RWPE1 (cell line): ENCODE measurements at regions of chr10 and their contacts with region 1.

Region 1: GRCh38 chr10:69914398-69915214 is 112.9 kb downstream of the COL13A1 start:
- DNase-seq: peak; percentile 79
- H3K27ac ChIP-seq: no peak overlapping the region
- CTCF ChIP-seq: peak; percentile 92

Region 2: DNA sequence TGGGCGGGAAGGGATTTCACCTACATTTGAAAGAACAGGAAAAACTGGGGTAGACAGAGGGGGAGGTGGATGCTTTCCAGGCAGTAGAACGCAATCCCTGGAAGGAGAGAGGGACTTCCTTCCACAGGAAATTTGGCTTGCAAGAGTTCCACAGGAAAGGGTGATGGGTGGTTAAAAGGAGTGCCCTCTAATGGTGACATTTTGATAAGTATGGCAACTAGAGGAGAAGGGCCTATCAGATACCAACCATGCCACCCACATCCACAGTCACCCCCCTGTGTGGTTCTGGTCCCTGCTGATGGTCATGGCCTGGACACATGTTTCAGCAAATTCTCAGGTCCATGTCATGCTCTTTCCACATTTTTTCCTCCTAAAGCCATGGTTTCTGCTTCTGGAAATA is 140.0 kb before region 1 on chr10:
- CTCF ChIA-PET with region 1: no interaction called
- POLR2A ChIA-PET with region 1: no interaction called
- DNase-seq: no peak
- H3K27ac ChIP-seq: no peak overlapping the region
- CTCF ChIP-seq: no peak

Region 3: DNA sequence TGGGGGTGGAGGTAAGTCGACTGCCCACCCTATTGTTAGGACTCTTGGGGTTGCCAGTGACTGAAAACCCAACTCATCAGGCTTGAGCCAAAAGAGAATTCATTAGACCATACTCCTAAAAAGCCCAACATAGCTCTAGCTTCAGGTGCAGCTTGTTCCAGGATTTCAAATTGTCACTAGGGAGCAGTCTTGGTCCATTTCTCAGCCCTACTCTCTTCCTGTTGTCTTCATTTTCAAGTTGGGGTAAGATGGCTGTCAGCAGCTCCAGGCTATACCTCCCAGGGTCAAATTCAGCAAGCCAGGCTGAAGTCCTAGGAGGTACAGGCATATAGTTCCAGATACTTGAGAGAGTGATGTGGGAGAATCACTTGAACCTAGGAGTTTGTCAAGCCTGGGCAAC is 127.8 kb before region 1 on chr10:
- CTCF ChIA-PET with region 1: interaction called, 21 read pairs
- POLR2A ChIA-PET with region 1: no interaction called
- DNase-seq: no peak
- H3K27ac ChIP-seq: no peak overlapping the region
- CTCF ChIP-seq: no peak

Region 4: DNA sequence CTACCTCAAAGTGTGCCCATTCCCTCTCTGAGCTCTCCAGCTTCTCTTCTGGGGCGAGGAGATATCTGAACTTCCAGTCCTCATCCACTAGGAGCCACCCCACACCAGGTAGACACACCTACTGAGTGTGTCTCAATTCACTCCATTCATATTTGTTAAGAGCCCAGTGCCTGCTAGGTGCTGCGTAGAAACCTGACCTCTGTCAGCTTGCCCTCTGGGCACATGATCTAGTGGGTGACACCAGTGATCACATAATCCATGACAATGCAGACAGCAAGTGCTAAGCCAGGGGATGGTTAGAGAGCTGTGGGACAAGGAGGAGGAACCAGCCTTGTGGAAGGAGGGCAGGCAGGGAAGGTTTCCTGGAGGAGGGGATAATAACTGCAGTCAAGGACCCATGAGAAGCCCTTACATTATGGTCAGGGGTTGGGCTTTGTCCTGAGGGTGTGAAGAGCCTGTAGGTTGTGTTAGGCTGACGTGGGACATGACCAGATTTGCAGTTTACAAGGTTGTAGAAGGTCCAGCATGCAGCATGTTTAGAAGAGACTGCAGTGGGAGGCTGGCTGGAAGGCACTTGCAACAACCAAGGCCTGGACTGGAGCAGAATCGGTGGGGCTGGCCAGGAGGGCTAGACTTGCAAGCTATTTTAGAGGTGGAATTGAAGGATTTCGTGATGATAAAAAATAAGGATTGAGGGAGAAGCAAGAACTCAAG is 31.1 kb before region 1 on chr10:
- CTCF ChIA-PET with region 1: interaction called, 13 read pairs
- POLR2A ChIA-PET with region 1: no interaction called
- DNase-seq: peak; percentile 64
- H3K27ac ChIP-seq: no peak overlapping the region
- CTCF ChIP-seq: no peak

Region 5: GRCh38 chr10:69901628-69902505 is 12.7 kb before region 1 on chr10:
- CTCF ChIA-PET with region 1: interaction called, 16 read pairs
- POLR2A ChIA-PET with region 1: no interaction called
- DNase-seq: peak; percentile 78
- H3K27ac ChIP-seq: no peak overlapping the region
- CTCF ChIP-seq: peak; percentile 19; the same call in 1 of the 2 replicates